ENCODE measurements at regions of chr3 and their contacts with region 1.

Region 1: GRCh38 chr3:100708967-100709841 is at the start of gene TFG:
- DNase-seq: peak; percentile 96 to 98 (median 98)
- H3K4me3 ChIP-seq: peak within 1 kb of the TSS; percentile 67 to 70
- H3K4me3 Mint-ChIP-seq: peak within 1 kb of the TSS; percentile 88 to 94 (median 92)
- H3K27ac ChIP-seq: peak within 1 kb of the TSS; percentile 95
- H3K27ac Mint-ChIP-seq: peak within 1 kb of the TSS; percentile 96 to 99 (median 98)
- H3K4me1 ChIP-seq: peaks cover 39% of the 10 kb centered on the region
- H3K4me1 Mint-ChIP-seq: peaks cover 32 to 55% (median 38%) of the 10 kb centered on the region in 4 donors
- H3K27me3 ChIP-seq: no peaks in the 10 kb centered on the region
- H3K27me3 Mint-ChIP-seq: no peaks in the 10 kb centered on the region
- total RNA-seq, gene TFG: 42.3 to 44.9 TPM

Region 2: DNA sequence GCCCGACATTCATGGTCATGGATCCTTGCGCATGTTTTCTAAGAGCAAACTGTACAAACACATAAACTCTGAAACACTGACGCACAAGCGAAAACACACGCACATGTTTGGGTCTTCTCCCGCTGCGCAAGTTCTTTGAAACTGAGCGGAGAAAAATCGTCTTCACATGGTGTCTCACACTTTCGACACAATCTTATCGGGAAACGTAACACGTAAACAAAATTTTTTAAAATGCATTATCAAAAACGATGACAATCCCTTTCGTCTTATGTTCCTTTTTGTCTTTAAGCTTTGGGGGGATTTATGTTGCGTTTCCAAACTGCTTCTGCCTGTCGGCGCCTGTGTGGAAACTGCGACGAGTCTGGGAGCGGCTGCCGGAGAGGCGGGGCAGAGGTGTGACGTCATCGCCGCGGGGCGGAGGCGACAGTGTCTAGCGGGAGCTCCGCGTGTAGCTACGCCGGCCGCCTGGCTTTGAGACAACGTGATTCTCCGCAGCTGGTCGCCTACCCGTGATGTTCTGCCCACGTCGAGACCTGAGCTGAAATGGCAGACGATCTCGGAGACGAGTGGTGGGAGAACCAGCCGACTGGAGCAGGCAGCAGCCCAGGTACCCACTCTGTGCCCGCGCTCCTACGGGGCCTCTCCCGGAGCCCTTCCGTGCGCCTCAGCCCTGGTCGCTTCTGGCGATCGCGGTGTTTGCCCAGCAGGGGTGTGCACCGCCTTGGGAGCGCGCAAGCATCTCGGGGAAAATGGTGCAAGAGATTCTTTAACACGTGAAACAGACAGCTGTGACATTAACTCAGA is 891.6 kb before region 1 on chr3 and contains the start of gene CMSS1:
- CTCF ChIA-PET with region 1: interaction called, 3 read pairs
- POLR2A ChIA-PET with region 1: no interaction called
- intact Hi-C with region 1: loop called (anchors 5 kb)
- DNase-seq: peak; percentile 96 to 98 (median 96)
- H3K4me3 ChIP-seq: peak within 1 kb of the TSS; percentile 59 to 73
- H3K4me3 Mint-ChIP-seq: peak within 1 kb of the TSS; percentile 93 to 98 (median 96)
- H3K27ac ChIP-seq: peak within 1 kb of the TSS; percentile 80
- H3K27ac Mint-ChIP-seq: peak within 1 kb of the TSS; percentile 99 to 100 (median 100)
- H3K4me1 ChIP-seq: peaks cover 20% of the 10 kb centered on the region
- H3K4me1 Mint-ChIP-seq: peaks cover 25 to 40% (median 34%) of the 10 kb centered on the region in 4 donors
- H3K27me3 ChIP-seq: no peaks in the 10 kb centered on the region
- H3K27me3 Mint-ChIP-seq: no peaks in the 10 kb centered on the region
- total RNA-seq, gene CMSS1: 18.3 to 20.5 TPM

Region 3: DNA sequence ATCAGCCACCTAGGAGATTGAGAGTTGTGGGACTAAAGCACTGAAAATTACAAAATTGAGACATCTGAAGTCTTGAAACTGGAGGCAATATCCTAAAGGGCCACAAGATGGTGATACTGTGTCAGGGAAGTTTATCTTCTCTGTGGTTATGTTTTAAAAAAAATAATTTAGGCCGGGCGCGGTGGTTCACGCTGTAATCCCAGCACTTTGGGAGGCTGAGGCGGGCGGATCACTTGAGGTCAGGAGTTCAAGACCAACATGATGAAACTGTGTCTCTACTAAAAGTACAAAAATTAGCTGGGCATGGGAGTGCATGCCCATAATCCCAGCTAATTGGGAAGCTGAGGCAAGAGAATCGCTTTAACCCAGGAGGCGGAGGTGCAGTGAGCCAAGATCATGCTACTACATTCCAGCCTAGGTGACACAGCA is 392.5 kb before region 1 on chr3:
- CTCF ChIA-PET with region 1: no interaction called
- POLR2A ChIA-PET with region 1: no interaction called
- intact Hi-C with region 1: loop called (anchors 10 kb)
- DNase-seq: peak; percentile 42 to 48 (median 44)
- H3K4me3 ChIP-seq: no peak overlapping the region
- H3K4me3 Mint-ChIP-seq: peak overlapping the region in 4 of 8 donors; percentile 23 to 50 (median 40)
- H3K27ac ChIP-seq: no peak overlapping the region
- H3K27ac Mint-ChIP-seq: peak overlapping the region in 6 of 7 donors; percentile 2 to 70 (median 60)
- H3K4me1 ChIP-seq: peaks cover 11% of the 10 kb centered on the region
- H3K4me1 Mint-ChIP-seq: peaks cover 5 to 17% (median 9%) of the 10 kb centered on the region in 4 donors
- H3K27me3 ChIP-seq: no peaks in the 10 kb centered on the region
- H3K27me3 Mint-ChIP-seq: no peaks in the 10 kb centered on the region

Region 4: DNA sequence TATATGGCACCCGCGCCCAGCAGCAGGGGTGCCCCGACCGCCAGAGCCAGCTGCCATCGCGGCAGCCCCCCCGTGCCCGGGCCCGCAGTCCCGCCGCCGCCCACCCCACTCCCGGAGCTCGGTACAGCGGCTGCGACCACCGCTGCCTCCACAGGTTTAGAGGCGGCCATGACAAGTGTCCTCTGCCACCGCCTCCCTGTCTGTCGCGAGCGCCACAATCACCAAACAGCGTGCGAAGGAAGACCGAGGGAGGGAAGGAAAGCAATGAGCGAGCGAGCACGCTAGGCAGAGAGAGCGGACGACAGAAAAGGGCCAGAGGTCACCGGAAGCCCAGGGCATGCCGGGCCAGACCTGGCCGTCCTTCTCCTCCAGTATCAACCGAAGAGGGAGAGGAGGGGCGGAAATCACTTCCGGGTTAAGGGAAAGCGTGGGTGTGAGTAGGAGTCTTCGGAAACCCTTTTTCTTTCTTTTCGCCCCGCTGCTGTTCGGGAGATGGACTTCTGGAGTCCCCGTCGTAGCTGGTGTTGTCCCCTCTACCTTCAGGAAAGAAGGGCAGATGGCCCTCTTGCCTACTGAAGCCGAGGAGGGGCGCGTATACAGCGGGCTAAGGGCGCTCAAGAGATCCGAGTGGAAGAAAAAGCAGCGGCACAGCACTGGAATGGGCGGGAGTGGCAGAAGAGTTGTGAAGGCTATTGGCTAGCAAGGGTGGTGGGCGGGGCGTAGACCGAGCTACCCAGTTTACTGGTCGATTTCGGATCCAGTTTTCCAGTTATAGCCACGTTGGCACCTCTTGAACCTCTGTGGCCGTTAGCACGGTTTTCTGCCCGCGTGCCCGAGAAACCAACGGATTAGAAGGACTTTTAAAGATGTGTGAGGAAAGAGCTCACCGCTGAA is 308.2 kb before region 1 on chr3 and contains the starts of genes LNP1 and TOMM70:
- CTCF ChIA-PET with region 1: interaction called, 3 read pairs
- POLR2A ChIA-PET with region 1: interaction called, 7 read pairs
- intact Hi-C with region 1: loop called (anchors 1 kb)
- DNase-seq: peak; percentile 94 to 97 (median 95)
- H3K4me3 ChIP-seq: peak within 1 kb of the TSS; percentile 83 to 98
- H3K4me3 Mint-ChIP-seq: peak within 1 kb of the TSS; percentile 96 to 99 (median 97)
- H3K27ac ChIP-seq: peak within 1 kb of the TSS; percentile 85
- H3K27ac Mint-ChIP-seq: peak within 1 kb of the TSS; percentile 95 to 99 (median 97)
- H3K4me1 ChIP-seq: peaks cover 52% of the 10 kb centered on the region
- H3K4me1 Mint-ChIP-seq: peaks cover 36 to 73% (median 57%) of the 10 kb centered on the region in 4 donors
- H3K27me3 ChIP-seq: no peaks in the 10 kb centered on the region
- H3K27me3 Mint-ChIP-seq: no peaks in the 10 kb centered on the region
- total RNA-seq, gene LNP1: 1.8 to 2.2 TPM
- total RNA-seq, gene TOMM70: 34.7 to 37.5 TPM

Region 5: GRCh38 chr3:100725935-100726513 is 16.8 kb after region 1 on chr3:
- CTCF ChIA-PET with region 1: interaction called, 5 read pairs
- POLR2A ChIA-PET with region 1: interaction called, 4 read pairs
- intact Hi-C with region 1: loop called (anchors 2 kb)
- DNase-seq: no peak
- H3K4me3 ChIP-seq: no peak overlapping the region
- H3K4me3 Mint-ChIP-seq: no peak overlapping the region
- H3K27ac ChIP-seq: no peak overlapping the region
- H3K27ac Mint-ChIP-seq: peak overlapping the region in 4 of 7 donors; percentile 50 to 74 (median 64)
- H3K4me1 ChIP-seq: no peaks in the 10 kb centered on the region
- H3K4me1 Mint-ChIP-seq: peaks cover 17 to 21% (median 18%) of the 10 kb centered on the region in 4 donors
- H3K27me3 ChIP-seq: no peaks in the 10 kb centered on the region
- H3K27me3 Mint-ChIP-seq: no peaks in the 10 kb centered on the region

Measured in CD4-positive, alpha-beta memory T cell (primary cell).